BJ (cell line): ENCODE measurements at regions of chr2 and their contacts with region 1.

Region 1: DNA sequence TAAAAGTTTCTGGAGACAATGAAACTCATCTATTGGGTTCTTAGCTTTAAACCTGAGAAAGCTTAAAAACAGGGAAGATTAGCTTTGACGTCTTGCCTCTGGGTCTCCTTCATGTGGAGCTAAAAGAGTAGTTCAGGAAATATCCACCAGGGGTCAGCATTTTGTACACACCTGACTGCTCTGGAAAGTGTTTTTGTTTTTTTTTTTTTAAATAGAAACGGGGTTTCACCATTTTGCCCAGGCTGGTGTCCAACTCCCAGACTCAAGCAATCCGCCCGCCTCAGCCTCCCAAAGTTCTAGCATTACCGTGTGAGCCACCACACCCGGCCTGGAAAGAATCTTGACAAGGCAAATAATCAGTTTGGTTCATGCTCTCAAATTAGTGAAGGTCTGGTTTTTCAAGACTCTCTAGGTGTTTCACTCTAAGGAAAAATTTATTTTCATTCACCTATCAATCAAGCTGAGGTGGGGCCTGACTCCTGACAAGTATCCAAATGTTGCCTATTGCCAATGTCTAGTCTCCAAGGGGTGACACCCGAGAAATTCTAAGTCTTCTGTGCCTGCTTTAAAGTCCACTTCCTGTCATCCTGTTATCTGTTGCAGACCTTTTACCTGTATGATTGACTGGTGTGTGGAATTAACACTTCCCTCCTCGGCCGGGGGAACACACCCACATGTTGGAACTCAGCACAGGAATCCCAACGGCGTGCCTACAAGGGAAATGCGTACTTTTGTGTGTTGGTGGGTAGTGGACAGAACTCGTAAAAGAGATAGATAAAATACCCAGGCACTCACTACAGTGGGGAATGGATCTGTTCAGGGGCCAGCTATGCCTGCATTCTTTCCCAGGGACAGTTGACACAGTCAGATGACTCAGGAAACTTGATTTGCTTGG is 11.3 kb downstream of the IL1RN start:
- DNase-seq: peak; percentile 11
- H3K4me3 ChIP-seq: no peak overlapping the region
- H3K27me3 ChIP-seq: no peaks in the 10 kb centered on the region
- CTCF ChIP-seq: peak; percentile 75

Region 2: DNA sequence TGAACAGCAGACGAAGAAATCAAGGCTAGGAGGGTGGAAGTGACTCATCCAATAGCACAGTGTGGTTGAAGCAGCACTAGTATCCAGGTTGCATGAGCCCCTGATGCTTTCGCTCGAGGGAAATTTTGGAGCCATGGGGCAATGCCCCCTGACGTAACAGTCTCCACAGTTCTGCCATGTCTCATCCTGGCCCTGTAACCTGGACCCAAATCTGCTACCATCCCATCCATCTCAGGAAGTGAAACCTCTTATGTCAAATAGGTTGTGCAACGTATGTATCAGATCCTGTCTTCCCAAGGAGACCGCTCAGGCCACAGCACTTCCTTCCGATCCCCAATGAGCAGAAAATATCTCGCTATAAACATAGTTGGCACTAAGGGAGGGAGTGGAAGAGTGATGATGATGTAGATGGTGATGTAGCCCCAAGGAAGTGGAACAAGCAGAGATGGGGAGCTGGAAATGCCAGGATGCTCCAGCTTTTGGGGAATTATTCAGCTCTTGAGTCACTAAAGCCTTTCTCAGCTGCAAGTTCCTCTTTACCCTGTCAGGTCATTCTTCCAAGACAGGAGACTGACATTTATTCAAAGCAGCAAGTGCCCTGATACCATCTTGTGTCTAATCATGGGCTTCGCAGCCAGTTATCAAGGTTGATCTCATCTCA is 299.1 kb before region 1 on chr2:
- CTCF ChIA-PET with region 1: no interaction called
- POLR2A ChIA-PET with region 1: no interaction called
- DNase-seq: no peak
- H3K4me3 ChIP-seq: no peak overlapping the region
- H3K27me3 ChIP-seq: no peaks in the 10 kb centered on the region
- CTCF ChIP-seq: no peak

Region 3: DNA sequence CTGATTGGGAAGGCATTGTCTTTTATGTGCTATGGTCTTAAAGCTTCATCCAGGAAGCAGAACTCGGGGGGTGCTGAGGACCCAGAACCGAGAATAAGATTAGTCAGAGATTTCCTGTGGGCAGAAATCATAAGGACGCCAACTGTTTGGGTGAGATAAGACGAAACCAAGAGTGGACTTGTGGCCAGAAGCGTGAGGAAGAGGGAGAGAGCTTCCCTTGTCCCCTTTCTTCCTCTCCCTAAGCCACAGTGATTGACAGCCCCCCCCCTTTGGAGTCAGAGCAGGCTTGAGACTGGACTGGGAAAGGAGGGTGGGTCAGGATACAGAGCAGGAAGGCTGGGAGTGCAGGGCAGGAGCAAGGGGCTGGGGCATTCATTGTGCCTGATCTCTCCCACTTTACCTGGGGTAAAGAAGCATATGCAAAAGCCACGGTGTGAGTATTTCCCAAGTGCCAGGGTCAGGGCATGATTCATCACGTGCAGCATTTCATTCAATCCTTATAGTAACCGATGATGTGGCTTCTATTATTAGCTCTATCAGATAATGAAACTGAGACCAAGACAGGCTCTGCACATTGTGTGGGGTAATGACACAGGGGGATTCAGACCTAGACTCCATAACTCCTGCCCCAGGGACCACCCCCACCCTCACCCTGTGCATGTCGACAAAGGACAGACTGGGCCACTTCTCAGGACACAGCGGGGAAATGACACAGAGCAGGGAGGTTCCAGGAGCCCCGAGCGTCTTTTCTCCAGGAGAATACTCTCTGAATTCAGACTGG is 14.3 kb before region 1 on chr2:
- CTCF ChIA-PET with region 1: interaction called, 28 read pairs
- POLR2A ChIA-PET with region 1: no interaction called
- DNase-seq: no peak
- H3K4me3 ChIP-seq: no peak overlapping the region
- H3K27me3 ChIP-seq: peaks cover 3% of the 10 kb centered on the region; the same call in 1 of the 2 replicates
- CTCF ChIP-seq: no peak

Region 4: GRCh38 chr2:113181258-113182051 is 42.8 kb after region 1 on chr2:
- CTCF ChIA-PET with region 1: interaction called, 19 read pairs
- POLR2A ChIA-PET with region 1: no interaction called
- DNase-seq: no peak
- H3K4me3 ChIP-seq: no peak overlapping the region
- H3K27me3 ChIP-seq: no peaks in the 10 kb centered on the region
- CTCF ChIP-seq: no peak

Region 5: GRCh38 chr2:113248997-113249770 is 110.5 kb after region 1 on chr2:
- CTCF ChIA-PET with region 1: interaction called, 21 read pairs
- POLR2A ChIA-PET with region 1: interaction called, 3 read pairs
- DNase-seq: no peak
- H3K4me3 ChIP-seq: no peak overlapping the region
- H3K27me3 ChIP-seq: no peaks in the 10 kb centered on the region
- CTCF ChIP-seq: peak; percentile 90

Region 6: GRCh38 chr2:113376913-113377445 is 238.3 kb after region 1 on chr2:
- CTCF ChIA-PET with region 1: interaction called, 48 read pairs
- POLR2A ChIA-PET with region 1: interaction called, 3 read pairs
- DNase-seq: no peak
- H3K4me3 ChIP-seq: no peak overlapping the region
- H3K27me3 ChIP-seq: no peaks in the 10 kb centered on the region; the same call in 1 of the 2 replicates
- CTCF ChIP-seq: no peak